HCT116 (cell line): ENCODE measurements at regions of chr6 and their contacts with region 1.

Region 1: GRCh38 chr6:31366693-31367470 is 9.9 kb upstream of the HLA-B start:
- DNase-seq: peak; percentile 87
- ATAC-seq: peak; percentile 99
- H3K4me3 ChIP-seq: peak overlapping the region; percentile 41 to 59
- H3K27ac ChIP-seq: no peak overlapping the region
- H3K4me1 ChIP-seq: peaks cover 0 to 18% of the 10 kb centered on the region in 2 experiments; a peak in 1 of 4 replicates
- H3K27me3 ChIP-seq: no peaks in the 10 kb centered on the region
- CTCF ChIP-seq: peak; percentile 88 to 93 (median 91)
- POLR2A ChIP-seq: no peak
- RAD21 ChIP-seq: peak; percentile 98

Region 2: DNA sequence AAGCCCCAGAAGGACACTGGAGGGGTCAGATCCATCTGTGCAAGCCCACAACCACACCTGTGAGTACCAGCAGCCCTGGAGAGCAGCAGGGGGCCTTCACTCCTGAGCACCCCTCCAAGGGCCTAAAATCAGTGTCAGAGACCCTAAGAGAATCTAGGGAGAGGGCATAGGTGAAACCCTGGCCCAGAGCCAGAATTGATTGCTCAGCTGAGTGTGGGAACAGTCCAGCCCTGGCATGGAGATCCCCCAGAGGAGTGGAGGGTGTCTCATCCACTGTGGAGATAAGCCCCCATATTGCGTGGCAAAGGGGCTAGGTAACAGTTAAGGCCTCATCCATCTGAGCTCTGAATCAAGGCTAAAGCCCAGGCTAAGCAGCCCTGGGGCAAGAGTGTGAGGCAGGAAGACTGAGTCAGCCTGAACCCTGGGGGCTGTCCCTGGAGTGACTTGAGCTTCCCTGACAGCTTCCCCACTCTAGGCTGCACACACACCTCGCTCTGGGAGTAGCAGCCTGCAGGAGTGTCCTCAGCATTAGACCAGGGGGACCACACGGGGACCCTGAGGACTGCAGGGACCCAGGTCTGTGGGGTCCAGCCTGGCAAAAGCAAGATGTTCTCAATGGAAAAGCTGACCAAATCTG is 1835.3 kb before region 1 on chr6:
- CTCF ChIA-PET with region 1: no interaction called
- POLR2A ChIA-PET with region 1: no interaction called
- RAD21 ChIA-PET with region 1: no interaction called
- intact Hi-C with region 1: no loop called
- DNase-seq: no peak
- ATAC-seq: no peak
- H3K4me3 ChIP-seq: no peak overlapping the region
- H3K27ac ChIP-seq: no peak overlapping the region
- H3K4me1 ChIP-seq: no peaks in the 10 kb centered on the region
- H3K27me3 ChIP-seq: no peaks in the 10 kb centered on the region
- CTCF ChIP-seq: no peak
- POLR2A ChIP-seq: no peak
- RAD21 ChIP-seq: no peak

Region 3: DNA sequence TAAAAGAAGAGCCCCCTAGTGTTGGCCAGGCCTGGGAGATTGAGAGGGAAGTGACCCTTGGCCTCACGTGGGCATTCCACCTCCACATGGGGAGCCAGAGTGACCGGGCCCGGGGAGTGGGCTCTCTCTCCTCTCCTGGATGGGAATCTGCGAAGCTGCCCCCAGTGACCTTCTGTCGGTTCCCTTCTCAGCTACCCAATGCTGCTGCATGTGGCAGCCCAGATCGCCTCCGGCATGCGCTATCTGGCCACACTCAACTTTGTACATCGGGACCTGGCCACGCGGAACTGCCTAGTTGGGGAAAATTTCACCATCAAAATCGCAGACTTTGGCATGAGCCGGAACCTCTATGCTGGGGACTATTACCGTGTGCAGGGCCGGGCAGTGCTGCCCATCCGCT is 469.0 kb before region 1 on chr6:
- CTCF ChIA-PET with region 1: no interaction called
- POLR2A ChIA-PET with region 1: no interaction called
- RAD21 ChIA-PET with region 1: no interaction called
- intact Hi-C with region 1: no loop called
- DNase-seq: no peak
- ATAC-seq: no peak
- H3K4me3 ChIP-seq: no peak overlapping the region
- H3K27ac ChIP-seq: no peak overlapping the region
- H3K4me1 ChIP-seq: no peaks in the 10 kb centered on the region
- H3K27me3 ChIP-seq: no peaks in the 10 kb centered on the region
- CTCF ChIP-seq: no peak
- POLR2A ChIP-seq: no peak
- RAD21 ChIP-seq: no peak

Region 4: DNA sequence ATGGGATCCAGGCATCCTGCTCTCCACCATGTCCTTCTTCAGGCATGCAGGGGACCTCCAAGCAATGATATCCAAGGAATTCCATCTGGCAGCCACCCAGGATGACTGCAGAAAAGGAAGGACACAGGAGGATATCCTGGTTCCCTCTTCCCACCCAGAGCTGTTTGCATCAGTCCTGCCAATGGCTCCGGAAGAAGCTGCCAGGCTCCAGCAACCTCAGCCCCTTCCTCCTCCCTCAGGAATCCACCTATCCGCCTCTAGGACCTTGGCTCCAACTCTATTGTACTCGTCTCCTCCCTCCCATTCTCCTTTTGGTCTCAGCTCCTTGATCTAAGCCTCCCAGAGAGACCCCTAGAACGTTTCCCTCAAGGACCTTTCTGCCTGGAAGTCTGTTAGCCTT is 227.3 kb before region 1 on chr6:
- CTCF ChIA-PET with region 1: interaction called, 5 read pairs
- POLR2A ChIA-PET with region 1: no interaction called
- RAD21 ChIA-PET with region 1: no interaction called
- intact Hi-C with region 1: loop called (anchors 1 kb)
- DNase-seq: no peak
- ATAC-seq: no peak
- H3K4me3 ChIP-seq: no peak overlapping the region
- H3K27ac ChIP-seq: no peak overlapping the region
- H3K4me1 ChIP-seq: peaks cover 4 to 13% of the 10 kb centered on the region in 2 experiments; a peak in 3 of 4 replicates
- H3K27me3 ChIP-seq: no peaks in the 10 kb centered on the region
- CTCF ChIP-seq: no peak
- POLR2A ChIP-seq: no peak
- RAD21 ChIP-seq: no peak

Region 5: GRCh38 chr6:31197559-31198305 is 169.2 kb before region 1 on chr6:
- CTCF ChIA-PET with region 1: interaction called, 61 read pairs
- POLR2A ChIA-PET with region 1: interaction called, 16 read pairs
- RAD21 ChIA-PET with region 1: interaction called, 12 to 13 read pairs
- intact Hi-C with region 1: loop called (anchors 1 kb)
- DNase-seq: peak; percentile 66
- ATAC-seq: peak; percentile 81
- H3K4me3 ChIP-seq: peak overlapping the region; percentile 79 to 88
- H3K27ac ChIP-seq: peak overlapping the region; percentile 95
- H3K4me1 ChIP-seq: peaks cover 12 to 30% of the 10 kb centered on the region in 2 experiments
- H3K27me3 ChIP-seq: no peaks in the 10 kb centered on the region
- CTCF ChIP-seq: no peak
- POLR2A ChIP-seq: peak; percentile 38
- RAD21 ChIP-seq: 0 out of 2 replicates have a peak, but pooled peaks have one; percentile 5

Region 6: GRCh38 chr6:31203345-31203979 is 163.4 kb before region 1 on chr6:
- CTCF ChIA-PET with region 1: interaction called, 11 read pairs
- POLR2A ChIA-PET with region 1: interaction called, 4 read pairs
- RAD21 ChIA-PET with region 1: interaction called, 3 to 5 read pairs
- intact Hi-C with region 1: no loop called
- DNase-seq: peak; percentile 74
- ATAC-seq: peak; percentile 74
- H3K4me3 ChIP-seq: peak overlapping the region; percentile 6 to 34; a peak in 3 of 4 replicates
- H3K27ac ChIP-seq: peak overlapping the region; percentile 56
- H3K4me1 ChIP-seq: peaks cover 23 to 45% of the 10 kb centered on the region in 2 experiments
- H3K27me3 ChIP-seq: no peaks in the 10 kb centered on the region
- CTCF ChIP-seq: no peak
- POLR2A ChIP-seq: no peak
- RAD21 ChIP-seq: no peak

Region 7: DNA sequence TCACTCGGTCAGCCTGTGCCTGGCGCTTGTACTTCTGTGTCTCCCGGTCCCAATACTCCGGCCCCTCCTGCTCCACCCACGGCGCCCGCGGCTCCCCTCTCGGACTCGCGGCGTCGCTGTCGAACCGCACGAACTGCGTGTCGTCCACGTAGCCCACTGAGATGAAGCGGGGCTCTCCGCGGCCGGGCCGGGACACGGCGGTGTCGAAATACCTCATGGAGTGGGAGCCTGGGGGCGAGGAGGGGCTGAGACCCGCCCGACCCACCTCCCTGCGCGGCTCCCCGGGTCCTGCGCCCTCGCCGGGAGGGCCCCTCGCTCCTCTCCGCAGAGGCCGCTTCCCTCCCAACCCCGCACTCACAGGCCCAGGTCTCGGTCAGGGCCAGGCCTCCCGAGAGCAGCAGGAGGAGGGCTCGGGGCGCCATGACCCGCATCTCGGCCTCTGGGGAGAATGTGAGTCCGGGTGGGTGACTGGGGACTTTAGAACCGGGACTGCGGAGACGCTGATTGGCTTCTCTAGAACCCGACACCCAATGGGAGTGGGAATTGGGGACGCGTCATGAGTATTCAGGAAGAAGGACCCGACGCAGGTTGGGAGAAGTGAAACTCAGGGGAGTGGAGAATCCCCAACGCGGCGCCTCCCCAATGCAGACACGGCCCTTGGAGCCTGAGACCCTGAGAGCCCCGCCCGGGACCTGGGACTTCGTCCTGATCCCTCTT is 95.1 kb before region 1 on chr6 and contains the start of gene HLA-C:
- CTCF ChIA-PET with region 1: interaction called, 4 read pairs
- POLR2A ChIA-PET with region 1: no interaction called
- RAD21 ChIA-PET with region 1: no interaction called
- intact Hi-C with region 1: loop called (anchors 5 kb)
- DNase-seq: peak; percentile 91
- ATAC-seq: peak; percentile 94
- H3K4me3 ChIP-seq: peak within 1 kb of the TSS; percentile 70 to 73
- H3K27ac ChIP-seq: peak within 1 kb of the TSS; percentile 93
- H3K4me1 ChIP-seq: peaks cover 6 to 15% of the 10 kb centered on the region in 2 experiments; a peak in 2 of 4 replicates
- H3K27me3 ChIP-seq: peaks cover 6% of the 10 kb centered on the region; the same call in 1 of the 2 replicates
- CTCF ChIP-seq: no peak
- POLR2A ChIP-seq: peak; percentile 47
- RAD21 ChIP-seq: no peak
- total RNA-seq, gene HLA-C: 333 TPM

Region 8: DNA sequence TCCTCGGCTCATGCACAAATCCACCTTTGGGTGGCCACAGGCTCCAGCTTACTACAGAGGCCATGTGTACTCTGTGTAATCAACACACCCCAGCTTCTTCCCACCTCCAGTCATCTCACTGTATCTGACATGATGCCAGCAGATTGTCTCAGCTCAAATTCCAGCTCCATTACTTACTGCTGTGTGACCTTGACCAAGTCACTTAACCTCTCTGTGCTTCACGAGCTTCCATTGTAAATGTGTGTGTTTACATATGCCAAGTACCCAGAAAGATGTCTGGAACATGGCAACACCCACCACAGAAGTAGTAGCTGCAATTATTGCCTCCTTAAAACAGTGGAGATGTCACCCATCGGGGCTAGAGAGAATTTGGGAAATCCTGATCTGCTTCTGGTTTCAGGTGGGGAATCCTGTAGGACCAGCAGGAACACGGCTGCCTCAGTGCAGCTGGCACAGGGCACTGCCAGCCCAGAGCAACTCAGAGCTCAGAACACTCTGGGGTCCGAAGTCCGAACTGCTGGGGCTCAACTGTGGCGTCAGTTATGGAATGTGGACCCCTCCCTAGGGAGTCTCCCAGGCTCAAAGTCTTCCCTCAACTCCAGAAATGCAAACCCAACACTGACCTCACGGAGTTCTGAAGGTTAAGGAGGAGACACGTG is 11.3 kb after region 1 on chr6:
- CTCF ChIA-PET with region 1: interaction called, 16 read pairs
- POLR2A ChIA-PET with region 1: no interaction called
- RAD21 ChIA-PET with region 1: no interaction called
- intact Hi-C with region 1: no loop called
- DNase-seq: no peak
- ATAC-seq: no peak
- H3K4me3 ChIP-seq: no peak overlapping the region
- H3K27ac ChIP-seq: no peak overlapping the region
- H3K4me1 ChIP-seq: no peaks in the 10 kb centered on the region
- H3K27me3 ChIP-seq: peaks cover 3% of the 10 kb centered on the region; the same call in 1 of the 2 replicates
- CTCF ChIP-seq: no peak
- POLR2A ChIP-seq: no peak
- RAD21 ChIP-seq: no peak